ENCODE measurements at regions of chr11 and their contacts with region 1.

Region 1: DNA sequence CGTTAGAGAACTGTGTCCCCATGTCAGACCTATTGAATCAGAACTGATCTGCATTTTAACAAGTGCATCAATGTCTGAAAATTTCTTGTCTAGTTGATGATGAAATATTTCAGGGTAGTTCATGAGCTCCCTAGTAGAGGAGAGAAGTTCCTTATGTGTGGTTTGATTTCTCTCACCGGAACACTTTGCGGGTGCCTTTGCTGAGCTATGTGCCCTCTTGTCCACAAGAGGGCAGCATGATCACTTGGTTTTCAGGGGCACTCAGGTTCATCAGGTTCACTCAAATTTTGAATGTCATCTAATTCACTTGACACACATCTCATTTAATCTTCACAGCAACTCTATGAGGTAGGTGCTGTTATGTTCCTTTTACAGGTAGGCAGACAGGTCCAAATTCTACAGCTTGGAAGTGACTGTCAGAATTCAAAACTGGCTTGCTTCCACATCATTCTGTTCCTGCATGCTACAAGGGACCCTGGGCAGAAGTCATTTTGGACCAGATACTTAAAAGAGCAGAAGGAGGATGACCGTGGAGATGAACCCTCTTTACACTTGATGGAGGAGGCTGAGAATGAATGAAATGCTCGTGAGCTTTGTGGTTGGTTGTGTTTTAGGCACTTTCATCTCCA is 55.6 kb downstream of the P4HA3 start:
- DNase-seq: peak; percentile 17 to 54
- H3K4me3 ChIP-seq: no peak overlapping the region
- H3K27ac ChIP-seq: no peak overlapping the region
- H3K4me1 ChIP-seq: no peaks in the 10 kb centered on the region
- H3K27me3 ChIP-seq: no peaks in the 10 kb centered on the region
- CTCF ChIP-seq: peak; percentile 70 to 87 (median 83)
- EP300 ChIP-seq: no peak
- POLR2A ChIP-seq: no peak
- RAD21 ChIP-seq: peak; percentile 88 to 90

Region 2: GRCh38 chr11:74162681-74163467 is 93.0 kb before region 1 on chr11:
- CTCF ChIA-PET with region 1: no interaction called
- POLR2A ChIA-PET with region 1: no interaction called
- DNase-seq: no peak
- H3K4me3 ChIP-seq: no peak overlapping the region
- H3K27ac ChIP-seq: no peak overlapping the region
- H3K4me1 ChIP-seq: no peaks in the 10 kb centered on the region
- H3K27me3 ChIP-seq: peaks cover 0 to 1% (median 0%) of the 10 kb centered on the region in 4 experiments; a peak in 1 of 7 replicates
- CTCF ChIP-seq: no peak
- EP300 ChIP-seq: no peak
- POLR2A ChIP-seq: no peak
- RAD21 ChIP-seq: no peak

Region 3: GRCh38 chr11:74212533-74212932 is 43.3 kb before region 1 on chr11:
- CTCF ChIA-PET with region 1: no interaction called
- POLR2A ChIA-PET with region 1: no interaction called
- DNase-seq: no peak
- H3K4me3 ChIP-seq: no peak overlapping the region
- H3K27ac ChIP-seq: no peak overlapping the region
- H3K4me1 ChIP-seq: peaks cover 0 to 2% (median 0%) of the 10 kb centered on the region in 4 experiments; a peak in 2 of 7 replicates
- H3K27me3 ChIP-seq: no peaks in the 10 kb centered on the region
- CTCF ChIP-seq: no peak
- EP300 ChIP-seq: no peak
- POLR2A ChIP-seq: no peak
- RAD21 ChIP-seq: no peak

Region 4: GRCh38 chr11:74269161-74269811 is 13.4 kb after region 1 on chr11:
- CTCF ChIA-PET with region 1: interaction called, 19 read pairs
- POLR2A ChIA-PET with region 1: no interaction called
- DNase-seq: no peak
- H3K4me3 ChIP-seq: no peak overlapping the region
- H3K27ac ChIP-seq: no peak overlapping the region
- H3K4me1 ChIP-seq: no peaks in the 10 kb centered on the region
- H3K27me3 ChIP-seq: no peaks in the 10 kb centered on the region
- CTCF ChIP-seq: no peak
- EP300 ChIP-seq: no peak
- POLR2A ChIP-seq: no peak
- RAD21 ChIP-seq: no peak

Region 5: GRCh38 chr11:74321487-74322188 is 65.8 kb after region 1 on chr11:
- CTCF ChIA-PET with region 1: interaction called, 34 read pairs
- POLR2A ChIA-PET with region 1: no interaction called
- DNase-seq: peak in 1 of 2 experiments; percentile 58
- H3K4me3 ChIP-seq: no peak overlapping the region
- H3K27ac ChIP-seq: no peak overlapping the region
- H3K4me1 ChIP-seq: no peaks in the 10 kb centered on the region
- H3K27me3 ChIP-seq: no peaks in the 10 kb centered on the region
- CTCF ChIP-seq: peak; percentile 54 to 83 (median 66)
- EP300 ChIP-seq: no peak
- POLR2A ChIP-seq: no peak
- RAD21 ChIP-seq: peak; percentile 67 to 70